Mammary epithelial cell (primary cell): ENCODE measurements at regions of chr1 and their contacts with region 1.

Region 1: GRCh38 chr1:41504114-41505035 is 19.9 kb upstream of the EDN2 start:
- DNase-seq: peak; percentile 86
- H3K4me3 ChIP-seq: no peak overlapping the region
- H3K27ac ChIP-seq: peak overlapping the region; percentile 12
- H3K4me1 ChIP-seq: peaks cover 30% of the 10 kb centered on the region
- H3K27me3 ChIP-seq: no peaks in the 10 kb centered on the region
- CTCF ChIP-seq: no peak

Region 2: DNA sequence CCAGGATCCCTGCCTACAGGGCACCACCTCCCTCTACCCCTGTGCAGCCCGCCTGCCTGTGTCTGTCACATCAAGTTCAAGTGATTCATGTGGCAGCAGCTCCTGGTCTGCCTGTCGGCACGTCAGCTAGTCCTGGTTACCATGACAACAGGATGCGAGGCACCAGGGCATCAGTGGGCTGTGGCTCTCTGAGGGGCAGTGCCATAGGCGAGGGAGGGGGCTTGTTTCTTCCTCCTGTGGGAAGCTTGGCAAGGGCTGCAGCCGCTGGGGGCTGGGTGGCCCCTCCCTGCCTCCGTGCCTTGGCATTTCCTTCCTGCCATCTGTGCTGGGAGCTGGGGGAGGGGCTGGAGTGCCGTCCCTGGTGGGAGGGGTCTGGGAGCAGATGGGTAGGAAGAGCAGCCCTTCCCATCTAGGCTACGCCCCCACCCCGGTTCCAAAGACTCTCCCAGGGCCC is 100.0 kb before region 1 on chr1:
- CTCF ChIA-PET with region 1: interaction called, 3 read pairs
- dilution Hi-C with region 1: loop called (anchors 5 kb)
- in situ Hi-C with region 1: no loop called
- intact Hi-C with region 1: no loop called
- DNase-seq: peak; percentile 25
- H3K4me3 ChIP-seq: no peak overlapping the region
- H3K27ac ChIP-seq: no peak overlapping the region
- H3K4me1 ChIP-seq: no peaks in the 10 kb centered on the region
- H3K27me3 ChIP-seq: no peaks in the 10 kb centered on the region
- CTCF ChIP-seq: no peak

Region 3: GRCh38 chr1:41516168-41517061 is 12.0 kb after region 1 on chr1:
- CTCF ChIA-PET with region 1: no interaction called
- dilution Hi-C with region 1: no loop called
- in situ Hi-C with region 1: no loop called
- intact Hi-C with region 1: loop called (anchors 1 kb)
- DNase-seq: peak; percentile 71
- H3K4me3 ChIP-seq: peak overlapping the region in 2 of 3 experiments; percentile 18 to 38
- H3K27ac ChIP-seq: no peak overlapping the region
- H3K4me1 ChIP-seq: peaks cover 23% of the 10 kb centered on the region
- H3K27me3 ChIP-seq: no peaks in the 10 kb centered on the region
- CTCF ChIP-seq: peak; percentile 69 to 91